ENCODE measurements at regions of chr2 and their contacts with region 1.

Region 1: GRCh38 chr2:235746257-235747084 is 252.6 kb downstream of the AGAP1 start:
- DNase-seq: no peak
- ATAC-seq: peak; percentile 88

Region 2: GRCh38 chr2:235135990-235136561 is 610.4 kb before region 1 on chr2:
- intact Hi-C with region 1: loop called (anchors 5 kb)
- DNase-seq: peak; percentile 84
- ATAC-seq: peak; percentile 80

Region 3: DNA sequence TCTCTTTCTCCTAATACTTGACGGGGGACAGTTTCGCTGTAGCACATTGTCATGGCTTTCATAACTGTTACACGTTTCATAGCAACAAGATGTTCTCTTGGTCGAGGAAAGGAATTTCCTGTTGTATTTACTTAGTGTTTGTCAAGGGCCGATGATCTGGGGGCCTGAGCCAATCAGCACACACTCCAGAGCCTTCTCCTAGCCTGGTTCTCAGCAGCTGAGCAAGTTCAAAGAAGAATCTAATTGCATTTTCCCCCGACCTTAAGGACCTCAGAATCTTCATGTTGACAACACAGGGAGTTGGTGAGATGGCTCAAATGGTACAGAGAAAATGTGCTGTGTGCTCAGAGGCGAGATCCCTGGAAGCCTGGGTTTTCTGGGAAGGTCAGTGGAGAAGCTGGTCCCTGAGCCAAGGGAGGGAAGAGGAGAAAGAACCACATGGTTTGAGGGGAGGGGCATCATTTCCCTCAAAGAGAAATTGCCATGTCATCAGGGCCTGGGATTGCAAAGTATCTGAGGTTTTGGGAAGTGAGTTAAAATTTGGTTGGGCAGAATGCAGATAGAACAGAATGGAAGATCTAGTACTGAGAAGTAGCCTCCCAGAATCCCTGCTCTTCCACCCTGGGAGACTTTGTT is 329.5 kb before region 1 on chr2:
- intact Hi-C with region 1: loop called (anchors 10 kb)
- DNase-seq: no peak
- ATAC-seq: peak; percentile 30

Region 4: DNA sequence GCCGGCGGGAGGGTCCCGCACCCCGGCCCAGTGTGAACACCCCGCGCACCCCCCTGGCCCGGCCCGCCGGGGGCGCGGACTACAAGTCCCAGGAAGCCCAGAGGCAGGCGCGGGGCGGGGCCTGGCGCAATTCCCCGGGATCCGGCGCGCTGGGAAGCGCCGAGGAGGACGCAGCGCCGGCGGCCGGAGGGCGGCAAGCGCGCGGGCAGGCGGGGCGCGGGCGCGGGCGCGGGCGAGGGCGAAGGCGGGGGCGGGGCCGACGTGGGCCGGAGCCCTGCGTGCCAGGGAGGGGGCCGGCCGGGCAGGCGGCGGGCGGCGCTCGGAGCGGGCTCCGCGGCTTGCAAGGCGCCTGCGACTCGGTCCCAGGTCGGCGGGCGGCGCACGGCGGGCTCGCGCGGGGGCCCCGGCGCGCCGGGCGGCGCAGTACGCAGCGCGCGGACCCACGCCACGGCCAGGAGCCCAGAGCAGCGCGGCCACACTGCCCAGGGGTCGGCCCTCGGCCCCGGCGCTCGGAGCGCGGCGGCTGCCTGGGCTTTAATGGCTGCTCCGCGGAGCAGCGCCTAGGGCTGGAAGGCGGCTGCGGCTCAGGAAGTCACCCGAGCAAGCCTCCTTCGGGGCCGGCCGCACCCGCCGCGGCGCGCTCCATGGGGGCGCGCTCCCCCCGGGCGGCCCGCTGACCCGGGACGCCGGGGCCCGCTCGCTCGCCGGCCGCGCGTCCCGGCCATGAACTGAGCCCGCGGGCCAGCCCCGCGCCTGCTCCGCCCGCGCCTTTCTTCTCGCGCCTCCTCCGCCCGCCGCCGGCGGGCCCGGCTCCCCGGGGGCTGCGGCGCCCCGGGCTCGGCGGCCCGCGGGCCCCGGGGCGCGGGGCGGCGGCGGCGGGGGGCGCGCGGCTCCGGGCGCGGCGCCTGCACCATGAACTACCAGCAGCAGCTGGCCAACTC is 252.4 kb before region 1 on chr2 and contains the start of gene AGAP1:
- intact Hi-C with region 1: loop called (anchors 10 kb)
- DNase-seq: peak; percentile 89
- ATAC-seq: peak; percentile 93
- total RNA-seq, gene AGAP1: 23.5 TPM

Region 5: DNA sequence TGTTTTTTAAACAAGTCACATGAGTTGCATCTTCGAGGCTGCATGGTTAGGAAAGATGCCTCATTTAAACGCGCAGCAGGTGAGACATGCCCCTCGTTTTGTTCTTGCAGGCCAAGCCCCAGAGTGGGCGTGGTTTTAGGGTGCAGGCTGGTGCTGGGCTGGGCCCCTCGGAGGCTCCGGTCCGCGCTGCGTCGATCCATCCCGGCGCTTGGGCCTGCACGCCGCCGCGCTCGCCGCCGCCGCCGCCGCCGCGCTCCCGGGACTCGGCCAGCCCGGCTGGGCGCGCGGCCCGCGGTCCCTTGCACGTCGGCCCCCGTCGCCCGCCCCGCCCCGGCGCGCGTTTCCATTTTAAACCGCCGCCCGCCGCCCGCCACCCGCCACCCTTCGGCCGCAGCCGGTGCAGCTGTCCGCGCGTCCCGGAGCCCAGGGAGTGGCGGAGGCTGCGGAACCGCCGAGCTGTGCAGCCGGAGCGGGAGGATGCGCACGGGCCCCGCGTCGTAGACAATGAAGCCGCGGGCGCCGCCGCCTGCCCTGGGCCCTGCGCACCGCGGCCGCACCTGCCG is 77.1 kb before region 1 on chr2:
- intact Hi-C with region 1: loop called (anchors 5 kb)
- DNase-seq: peak; percentile 80
- ATAC-seq: peak; percentile 73

Region 6: GRCh38 chr2:235725016-235725489 is 21.4 kb before region 1 on chr2:
- intact Hi-C with region 1: no loop called
- DNase-seq: peak; percentile 84
- ATAC-seq: peak; percentile 77

Measured in Right ventricle myocardium inferior (tissue), 1 donor.